Caco-2 (cell line): ENCODE measurements at regions of chr4 and their contacts with region 1.

Region 1: GRCh38 chr4:88378691-88379559 is at the start of gene HERC6:
- DNase-seq: peak; percentile 80 to 87
- H3K4me3 ChIP-seq: peak within 1 kb of the TSS; percentile 80
- H3K4me3 Mint-ChIP-seq: peak within 1 kb of the TSS; percentile 73
- H3K27ac Mint-ChIP-seq: peak within 1 kb of the TSS; percentile 37
- H3K4me1 ChIP-seq: no peaks in the 10 kb centered on the region
- H3K4me1 Mint-ChIP-seq: no peaks in the 10 kb centered on the region
- H3K27me3 ChIP-seq: no peaks in the 10 kb centered on the region
- H3K27me3 Mint-ChIP-seq: peaks cover 3% of the 10 kb centered on the region
- CTCF ChIP-seq: peak; percentile 60 to 73
- total RNA-seq, gene HERC6: 6.5 and 7.6 TPM in 2 replicates

Region 2: DNA sequence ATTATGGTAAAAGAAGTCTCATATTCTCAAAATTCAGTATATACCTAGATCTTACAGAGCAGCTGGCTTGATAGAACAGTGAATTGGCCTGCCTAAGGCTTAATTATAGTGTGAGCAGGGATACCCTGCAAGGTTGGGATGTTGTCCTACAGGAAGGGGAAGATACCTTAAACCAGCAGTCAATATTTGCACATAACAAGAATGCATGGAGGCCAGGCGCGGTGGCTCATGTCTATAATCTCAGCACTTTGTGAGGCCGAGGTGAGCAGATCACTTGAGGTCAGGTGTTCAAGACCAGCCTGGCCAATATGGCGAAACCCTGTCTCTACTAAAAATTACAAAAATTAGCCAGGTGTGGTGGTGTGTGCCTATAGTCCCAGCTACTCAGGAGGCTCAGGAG is 161.8 kb before region 1 on chr4:
- CTCF ChIA-PET with region 1: interaction called, 6 read pairs
- POLR2A ChIA-PET with region 1: no interaction called
- intact Hi-C with region 1: loop called (anchors 2 kb)
- DNase-seq: peak; percentile 14 to 49
- H3K4me3 ChIP-seq: no peak overlapping the region
- H3K4me3 Mint-ChIP-seq: no peak overlapping the region
- H3K27ac Mint-ChIP-seq: no peak overlapping the region
- H3K4me1 ChIP-seq: peaks cover 10% of the 10 kb centered on the region
- H3K4me1 Mint-ChIP-seq: peaks cover 21% of the 10 kb centered on the region
- H3K27me3 ChIP-seq: no peaks in the 10 kb centered on the region
- H3K27me3 Mint-ChIP-seq: no peaks in the 10 kb centered on the region
- CTCF ChIP-seq: no peak

Region 3: GRCh38 chr4:88411473-88412096 is 32.7 kb after region 1 on chr4:
- CTCF ChIA-PET with region 1: no interaction called
- POLR2A ChIA-PET with region 1: no interaction called
- intact Hi-C with region 1: loop called (anchors 2 kb)
- DNase-seq: peak in 1 of 2 experiments; percentile 9
- H3K4me3 ChIP-seq: no peak overlapping the region
- H3K4me3 Mint-ChIP-seq: no peak overlapping the region
- H3K27ac Mint-ChIP-seq: no peak overlapping the region
- H3K4me1 ChIP-seq: peaks cover 9% of the 10 kb centered on the region
- H3K4me1 Mint-ChIP-seq: no peaks in the 10 kb centered on the region
- H3K27me3 ChIP-seq: no peaks in the 10 kb centered on the region
- H3K27me3 Mint-ChIP-seq: no peaks in the 10 kb centered on the region
- CTCF ChIP-seq: no peak

Region 4: GRCh38 chr4:88456757-88457306 is 77.9 kb after region 1 on chr4 and contains the start of gene HERC5:
- CTCF ChIA-PET with region 1: interaction called, 12 read pairs
- POLR2A ChIA-PET with region 1: interaction called, 4 read pairs
- intact Hi-C with region 1: loop called (anchors 1 kb)
- DNase-seq: peak; percentile 88 to 90
- H3K4me3 ChIP-seq: peak within 1 kb of the TSS; percentile 50
- H3K4me3 Mint-ChIP-seq: peak within 1 kb of the TSS; percentile 87
- H3K27ac Mint-ChIP-seq: peak within 1 kb of the TSS; percentile 81
- H3K4me1 ChIP-seq: no peaks in the 10 kb centered on the region
- H3K4me1 Mint-ChIP-seq: no peaks in the 10 kb centered on the region
- H3K27me3 ChIP-seq: no peaks in the 10 kb centered on the region
- H3K27me3 Mint-ChIP-seq: peaks cover 3% of the 10 kb centered on the region
- CTCF ChIP-seq: peak; percentile 54 to 80
- total RNA-seq, gene HERC5: 5.6 and 6.8 TPM in 2 replicates

Region 5: GRCh38 chr4:88523325-88524129 is 144.6 kb after region 1 on chr4 and contains the start of gene PYURF:
- CTCF ChIA-PET with region 1: no interaction called
- POLR2A ChIA-PET with region 1: no interaction called
- intact Hi-C with region 1: loop called (anchors 2 kb)
- DNase-seq: peak; percentile 93 to 95
- H3K4me3 ChIP-seq: peak within 1 kb of the TSS; percentile 56
- H3K4me3 Mint-ChIP-seq: peak within 1 kb of the TSS; percentile 93
- H3K27ac Mint-ChIP-seq: peak within 1 kb of the TSS; percentile 91
- H3K4me1 ChIP-seq: peaks cover 7% of the 10 kb centered on the region; the same call in 1 of the 2 replicates
- H3K4me1 Mint-ChIP-seq: peaks cover 7% of the 10 kb centered on the region
- H3K27me3 ChIP-seq: no peaks in the 10 kb centered on the region
- H3K27me3 Mint-ChIP-seq: no peaks in the 10 kb centered on the region
- CTCF ChIP-seq: no peak
- total RNA-seq, gene PYURF: 41.6 and 46.6 TPM in 2 replicates